GM18951 (cell line): ENCODE measurements at regions of chr2 and their contacts with region 1.

Region 1: DNA sequence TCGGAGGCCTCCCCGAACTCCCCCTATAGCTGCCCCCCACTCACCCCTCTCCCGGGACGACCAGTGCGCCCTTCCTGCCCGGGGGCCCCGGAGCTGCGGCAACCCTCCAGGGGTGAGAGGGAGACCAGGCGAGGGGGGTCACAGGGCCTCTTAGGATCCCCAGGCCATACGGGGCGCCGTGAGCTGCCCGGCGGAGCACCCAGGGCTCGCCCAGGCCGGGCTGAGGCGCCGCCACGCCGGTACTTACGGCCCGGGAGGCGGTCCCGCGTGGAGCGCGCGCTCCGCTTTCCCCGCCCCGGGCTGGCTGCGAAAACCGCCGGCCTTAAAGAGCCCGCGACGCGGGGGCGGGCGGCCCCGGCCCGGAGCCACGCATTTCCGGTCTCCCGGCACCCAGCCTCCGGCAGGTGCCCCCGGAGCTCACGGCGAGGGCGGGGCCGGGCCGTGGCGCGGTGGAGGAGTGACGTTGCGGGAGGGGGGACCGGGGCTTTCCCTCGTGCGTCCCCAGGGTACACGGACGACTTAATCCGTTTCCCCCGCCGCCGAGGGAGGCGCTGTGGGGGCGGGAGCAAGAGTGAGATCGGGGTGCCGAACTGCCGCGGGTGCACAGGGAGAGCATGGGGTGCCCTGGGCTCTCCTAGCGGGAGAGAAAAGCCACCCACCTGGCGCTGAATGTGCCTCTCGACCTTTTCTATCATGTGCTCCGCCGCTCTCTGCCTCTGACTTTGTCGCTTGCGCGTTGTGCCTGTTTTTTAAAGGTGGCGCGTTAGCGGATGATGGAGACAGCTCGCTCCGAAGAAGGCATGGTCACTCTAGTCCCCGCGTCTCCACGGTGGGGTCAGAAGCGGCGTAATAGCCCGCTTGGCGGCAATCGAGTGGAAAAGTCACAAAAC is at the start of gene METTL21A:
- POLR2A ChIP-seq: peak; percentile 66

Region 2: GRCh38 chr2:208025037-208025813 is 400.0 kb after region 1 on chr2 and contains the start of gene PLEKHM3:
- in situ Hi-C with region 1: loop called (anchors 25 kb)
- POLR2A ChIP-seq: peak; percentile 83